OCI-LY7 (cell line): ENCODE measurements at regions of chr19 and their contacts with region 1.

Region 1: DNA sequence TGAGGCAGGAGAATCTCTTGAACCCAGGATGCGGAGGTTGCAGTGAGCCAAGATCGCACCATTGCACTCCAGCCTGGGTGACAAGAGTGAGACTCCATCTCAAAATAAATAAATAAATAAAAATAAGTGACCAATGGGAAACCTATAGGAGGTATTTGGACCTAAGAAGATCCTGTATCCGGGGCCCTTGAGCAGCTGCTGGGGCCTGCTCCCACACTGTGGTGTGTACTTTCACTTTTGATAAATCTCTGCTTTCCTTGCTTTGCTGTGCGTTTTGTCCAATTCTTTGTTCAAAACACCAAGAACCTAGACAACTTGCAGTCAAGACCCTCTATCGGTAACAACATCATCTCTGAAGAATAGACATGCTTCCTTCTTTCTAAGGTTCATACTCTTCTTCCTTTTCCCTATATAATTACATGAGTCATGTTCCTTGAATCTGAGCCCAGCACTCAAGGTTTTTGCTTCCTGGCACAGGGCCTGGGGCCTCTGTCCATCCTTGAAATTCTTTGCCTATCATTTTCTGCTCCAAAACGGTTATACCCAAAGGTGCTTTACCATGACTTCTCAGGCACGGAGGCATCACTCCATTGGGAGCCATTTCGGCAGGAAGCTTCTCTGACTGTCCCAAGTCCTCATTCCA is 14.2 kb upstream of the PNMA8C start:
- DNase-seq: no peak
- H3K4me3 ChIP-seq: no peak overlapping the region
- H3K27ac ChIP-seq: no peak overlapping the region
- H3K4me1 ChIP-seq: peaks cover 17% of the 10 kb centered on the region
- CTCF ChIP-seq: no peak

Region 2: DNA sequence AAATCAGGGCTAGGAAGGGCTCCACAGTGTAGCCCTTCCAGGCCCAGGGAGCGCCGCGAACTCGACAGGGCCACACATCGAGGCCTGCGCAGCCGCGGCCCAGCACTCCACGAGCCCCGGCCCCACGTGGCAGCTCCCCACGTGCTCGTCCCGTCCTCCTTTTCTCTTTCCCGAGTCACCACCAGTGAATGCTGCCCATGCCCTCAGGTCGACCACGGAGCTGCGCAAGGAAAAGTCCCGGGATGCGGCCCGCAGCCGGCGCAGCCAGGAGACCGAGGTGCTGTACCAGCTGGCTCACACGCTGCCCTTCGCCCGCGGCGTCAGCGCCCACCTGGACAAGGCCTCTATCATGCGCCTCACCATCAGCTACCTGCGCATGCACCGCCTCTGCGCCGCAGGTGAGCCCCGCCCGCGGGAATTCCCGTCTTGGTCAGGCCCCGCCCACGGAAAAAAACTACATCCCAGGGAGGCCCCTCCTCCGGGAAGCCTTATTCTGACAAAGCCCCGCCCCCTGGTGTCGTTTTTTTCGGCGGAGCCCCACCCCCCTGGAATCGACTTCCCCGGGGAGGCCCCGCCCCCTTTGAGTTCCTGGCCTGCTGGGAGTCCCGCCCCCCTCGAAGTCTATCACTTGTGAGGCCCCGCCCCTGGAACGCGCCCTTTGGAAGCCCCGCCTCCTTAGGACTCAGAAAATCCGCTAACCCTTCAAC is 139.1 kb before region 1 on chr19:
- CTCF ChIA-PET with region 1: no interaction called
- POLR2A ChIA-PET with region 1: no interaction called
- intact Hi-C with region 1: no loop called
- DNase-seq: no peak
- H3K4me3 ChIP-seq: no peak overlapping the region
- H3K27ac ChIP-seq: no peak overlapping the region
- H3K4me1 ChIP-seq: no peaks in the 10 kb centered on the region
- CTCF ChIP-seq: no peak

Region 3: DNA sequence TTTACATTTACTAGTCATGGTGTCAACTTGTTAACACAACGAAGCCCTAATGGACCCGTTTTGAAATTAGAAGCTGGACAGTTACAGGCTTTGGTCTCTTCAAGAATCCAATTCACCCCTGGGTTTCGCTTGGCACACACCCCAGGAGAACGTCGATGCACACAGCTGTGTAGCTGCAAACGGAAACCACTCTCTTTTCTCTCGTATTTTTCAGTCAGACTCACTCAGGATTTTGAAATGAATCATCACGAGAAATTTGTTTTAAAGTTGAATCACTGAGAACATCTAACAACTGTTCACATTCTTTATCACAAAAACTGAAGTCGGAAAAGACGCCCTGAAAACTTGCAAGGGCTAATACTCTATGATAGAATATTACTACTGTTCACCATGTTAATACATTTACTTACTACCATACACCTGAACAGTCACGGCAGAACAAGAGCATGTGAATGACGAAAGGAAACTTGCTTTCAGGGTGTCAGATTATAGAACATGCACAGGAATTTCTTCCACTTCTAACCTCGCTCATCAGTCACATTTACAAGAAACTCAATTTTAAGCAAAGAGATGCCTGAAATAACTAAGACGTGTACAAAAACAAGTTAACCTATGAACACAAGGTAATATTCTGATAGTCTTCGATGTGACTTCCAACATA is 23.7 kb after region 1 on chr19:
- CTCF ChIA-PET with region 1: no interaction called
- POLR2A ChIA-PET with region 1: interaction called, 10 read pairs
- intact Hi-C with region 1: no loop called
- DNase-seq: peak; percentile 75
- H3K4me3 ChIP-seq: peak overlapping the region; percentile 51
- H3K27ac ChIP-seq: peak overlapping the region; percentile 74
- H3K4me1 ChIP-seq: peaks cover 40% of the 10 kb centered on the region
- CTCF ChIP-seq: no peak

Region 4: GRCh38 chr19:46513461-46514236 is 70.7 kb after region 1 on chr19:
- CTCF ChIA-PET with region 1: no interaction called
- POLR2A ChIA-PET with region 1: no interaction called
- intact Hi-C with region 1: no loop called
- DNase-seq: peak; percentile 85
- H3K4me3 ChIP-seq: no peak overlapping the region
- H3K27ac ChIP-seq: no peak overlapping the region
- H3K4me1 ChIP-seq: peaks cover 4% of the 10 kb centered on the region
- CTCF ChIP-seq: peak; percentile 95